ENCODE measurements at regions of chr17 and their contacts with region 1.

Region 1: DNA sequence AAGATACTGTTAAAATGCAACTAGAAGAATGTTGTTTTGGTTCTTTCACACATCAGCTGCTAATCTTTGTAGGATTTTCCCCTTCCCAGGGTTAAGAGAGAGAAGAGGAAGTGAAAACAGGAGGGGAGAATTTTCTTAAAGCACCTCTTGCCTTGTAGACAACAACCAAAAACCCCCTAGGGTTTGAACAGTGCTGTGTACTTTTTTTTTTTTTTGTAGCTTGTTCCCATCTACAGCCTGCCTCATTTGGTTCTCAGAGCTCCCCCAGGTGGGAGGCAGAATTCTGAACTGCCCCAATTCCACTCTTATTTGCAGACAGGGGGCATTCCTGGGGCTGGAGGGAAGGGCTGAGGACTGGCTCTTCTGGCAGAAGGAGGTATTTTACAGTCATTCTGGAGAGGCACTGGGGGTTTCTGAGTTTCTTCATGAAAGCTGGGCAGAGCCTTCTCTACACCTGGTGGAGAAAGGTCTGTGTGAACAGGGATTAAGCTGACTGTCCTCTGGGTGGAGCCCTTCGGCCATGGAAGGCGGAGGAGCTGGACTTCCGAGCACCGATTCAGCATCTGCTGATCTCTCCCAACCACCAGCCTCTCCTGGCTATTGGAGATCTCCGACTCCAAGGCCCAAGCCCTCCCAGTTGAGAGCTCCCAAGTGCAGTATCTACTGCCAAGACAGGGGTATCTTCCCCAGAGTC is 32.2 kb downstream of the SMARCE1 start:
- DNase-seq: peak; percentile 93
- ATAC-seq: peak; percentile 75
- H3K4me3 ChIP-seq: peak overlapping the region; percentile 35; the same call in 1 of the 2 replicates
- H3K27ac ChIP-seq: peak overlapping the region; percentile 29
- H3K4me1 ChIP-seq: peaks cover 30% of the 10 kb centered on the region
- H3K27me3 ChIP-seq: no peaks in the 10 kb centered on the region
- CTCF ChIP-seq: peak; percentile 57 to 65 (median 60)
- EP300 ChIP-seq: peak; percentile 97 to 98
- POLR2A ChIP-seq: no peak
- RAD21 ChIP-seq: peak; percentile 68

Region 2: GRCh38 chr17:40516581-40517285 is 98.7 kb before region 1 on chr17:
- CTCF ChIA-PET with region 1: interaction called, 13 read pairs
- POLR2A ChIA-PET with region 1: interaction called, 3 read pairs
- RAD21 ChIA-PET with region 1: interaction called, 11 read pairs
- SMC1A ChIA-PET with region 1: interaction called, 4 read pairs
- in situ Hi-C with region 1: no loop called
- intact Hi-C with region 1: no loop called
- DNase-seq: peak; percentile 60
- ATAC-seq: peak; percentile 91
- H3K4me3 ChIP-seq: peak overlapping the region; percentile 38; the same call in 1 of the 2 replicates
- H3K27ac ChIP-seq: peak overlapping the region; percentile 64
- H3K4me1 ChIP-seq: peaks cover 18% of the 10 kb centered on the region
- H3K27me3 ChIP-seq: no peaks in the 10 kb centered on the region; a peak in 1 of 4 replicates
- CTCF ChIP-seq: no peak
- EP300 ChIP-seq: peak; percentile 44 to 60; a peak in 3 of 4 replicates
- POLR2A ChIP-seq: no peak
- RAD21 ChIP-seq: no peak

Region 3: GRCh38 chr17:40551879-40552768 is 63.3 kb before region 1 on chr17:
- CTCF ChIA-PET with region 1: interaction called, 45 read pairs
- POLR2A ChIA-PET with region 1: interaction called, 39 read pairs
- RAD21 ChIA-PET with region 1: interaction called, 87 read pairs
- SMC1A ChIA-PET with region 1: interaction called, 39 read pairs
- in situ Hi-C with region 1: no loop called
- intact Hi-C with region 1: no loop called
- DNase-seq: no peak
- ATAC-seq: peak; percentile 5
- H3K4me3 ChIP-seq: no peak overlapping the region
- H3K27ac ChIP-seq: no peak overlapping the region
- H3K4me1 ChIP-seq: peaks cover 45% of the 10 kb centered on the region
- H3K27me3 ChIP-seq: no peaks in the 10 kb centered on the region
- CTCF ChIP-seq: no peak
- EP300 ChIP-seq: no peak
- POLR2A ChIP-seq: peak; percentile 82
- RAD21 ChIP-seq: no peak

Region 4: GRCh38 chr17:40647624-40648383 is 32.4 kb after region 1 on chr17 and contains the start of gene SMARCE1:
- CTCF ChIA-PET with region 1: interaction called, 17 read pairs
- POLR2A ChIA-PET with region 1: interaction called, 3 read pairs
- RAD21 ChIA-PET with region 1: interaction called, 12 read pairs
- SMC1A ChIA-PET with region 1: interaction called, 13 read pairs
- in situ Hi-C with region 1: no loop called
- intact Hi-C with region 1: no loop called
- DNase-seq: no peak
- ATAC-seq: peak; percentile 85
- H3K4me3 ChIP-seq: peak within 1 kb of the TSS; percentile 89
- H3K27ac ChIP-seq: peak within 1 kb of the TSS; percentile 98
- H3K4me1 ChIP-seq: no peaks in the 10 kb centered on the region
- H3K27me3 ChIP-seq: no peaks in the 10 kb centered on the region
- CTCF ChIP-seq: no peak
- EP300 ChIP-seq: peak in 1 of 2 experiments; percentile 99; a peak in 2 of 4 replicates
- POLR2A ChIP-seq: peak; percentile 89
- RAD21 ChIP-seq: no peak
- polyA plus RNA-seq, gene SMARCE1: 124 to 145 TPM

Region 5: DNA sequence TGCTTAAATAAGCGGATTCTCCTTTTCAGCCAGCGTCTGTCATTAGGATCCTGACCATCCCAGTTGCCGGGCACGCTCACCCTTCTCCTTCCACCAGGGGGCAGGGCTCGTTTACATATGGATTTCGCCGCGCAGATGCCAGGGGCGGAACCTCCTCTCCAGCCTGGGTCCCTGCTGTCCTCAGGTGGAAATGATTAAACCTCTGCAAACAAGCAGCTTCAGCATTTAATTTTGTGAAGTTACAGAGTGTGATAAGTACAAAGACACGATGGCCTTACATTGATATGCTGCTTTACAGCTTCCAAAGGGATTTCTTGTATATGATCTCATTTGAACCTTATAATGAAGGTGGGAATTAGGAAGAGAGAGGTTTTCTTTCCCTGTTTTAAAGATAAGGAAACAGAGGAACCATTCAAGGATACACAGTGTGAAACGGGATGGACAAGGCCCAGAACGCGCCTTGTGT is 188.2 kb after region 1 on chr17:
- CTCF ChIA-PET with region 1: interaction called, 14 read pairs
- POLR2A ChIA-PET with region 1: interaction called, 3 read pairs
- RAD21 ChIA-PET with region 1: interaction called, 4 read pairs
- SMC1A ChIA-PET with region 1: interaction called, 8 read pairs
- in situ Hi-C with region 1: loop called (anchors 5 kb)
- intact Hi-C with region 1: no loop called
- DNase-seq: no peak
- ATAC-seq: peak; percentile 97
- H3K4me3 ChIP-seq: no peak overlapping the region
- H3K27ac ChIP-seq: no peak overlapping the region
- H3K4me1 ChIP-seq: no peaks in the 10 kb centered on the region
- H3K27me3 ChIP-seq: peaks cover 7 to 10% of the 10 kb centered on the region in 2 experiments
- CTCF ChIP-seq: peak; percentile 84 to 90 (median 86)
- EP300 ChIP-seq: no peak
- POLR2A ChIP-seq: no peak
- RAD21 ChIP-seq: peak; percentile 91

Region 6: DNA sequence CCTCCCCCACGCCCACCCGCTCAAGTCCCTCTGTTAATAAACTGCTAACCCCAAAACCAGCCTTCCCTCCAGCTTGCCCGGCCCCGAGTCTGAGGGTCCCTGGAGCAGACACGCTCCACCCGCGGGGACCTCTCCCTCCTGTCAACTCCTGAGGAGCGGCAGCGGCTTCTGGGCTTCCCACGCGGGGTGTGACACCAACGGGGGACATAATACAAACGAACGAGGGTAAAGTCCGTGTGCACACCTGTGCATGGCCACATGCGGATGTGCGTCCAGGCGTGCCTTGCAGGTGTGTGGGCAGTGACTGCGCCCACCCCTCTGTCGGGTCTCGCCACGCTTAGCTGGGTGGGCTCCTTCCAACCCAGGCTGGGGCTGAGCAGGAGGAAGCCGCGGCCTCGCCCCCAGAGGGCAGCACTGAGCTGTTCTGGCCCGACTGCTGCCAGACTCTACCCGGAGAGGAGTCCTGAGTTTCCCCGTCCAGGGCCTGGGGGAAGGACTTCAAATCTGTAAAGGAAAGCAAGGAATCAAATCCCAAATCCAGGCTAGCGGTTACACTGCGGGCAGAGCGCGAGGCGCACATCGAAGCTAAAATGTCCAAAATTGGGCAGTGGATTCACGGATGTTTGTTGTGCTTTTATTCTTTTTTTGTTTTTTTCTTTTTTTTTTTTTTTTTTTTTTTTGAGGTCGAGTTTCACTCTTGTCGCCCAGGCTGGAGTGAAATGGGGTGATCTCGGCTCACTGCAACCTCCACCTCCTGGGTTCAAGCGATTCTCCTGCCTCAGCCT is 1033.2 kb after region 1 on chr17:
- CTCF ChIA-PET with region 1: interaction called, 30 read pairs
- POLR2A ChIA-PET with region 1: no interaction called
- RAD21 ChIA-PET with region 1: interaction called, 4 read pairs
- SMC1A ChIA-PET with region 1: interaction called, 11 read pairs
- in situ Hi-C with region 1: no loop called
- intact Hi-C with region 1: no loop called
- DNase-seq: no peak
- ATAC-seq: peak; percentile 97
- H3K4me3 ChIP-seq: peak overlapping the region; percentile 57; the same call in 1 of the 2 replicates
- H3K27ac ChIP-seq: no peak overlapping the region
- H3K4me1 ChIP-seq: peaks cover 9% of the 10 kb centered on the region
- H3K27me3 ChIP-seq: no peaks in the 10 kb centered on the region
- CTCF ChIP-seq: peak; percentile 90 to 95 (median 91)
- EP300 ChIP-seq: no peak
- POLR2A ChIP-seq: no peak
- RAD21 ChIP-seq: peak; percentile 58